Activated T-helper 2 cell treated with anti-CD3 and anti-CD28 coated beads, Interferon-gamma antibody, Interleukin-2, Interleukin-4, amounts not matched to agents 10 μg/mL and 5 μg/mL and 100 μg/mL, durations not matched to agents 14 hours and 24 hours and 36 hours (primary cell): ENCODE measurements at regions of chr6 and their contacts with region 1.

Region 1: GRCh38 chr6:107080036-107080435 is 35.3 kb downstream of the BEND3 start:
- DNase-seq: no peak
- H3K4me3 Mint-ChIP-seq: no peak overlapping the region
- H3K27ac Mint-ChIP-seq: no peak overlapping the region
- H3K4me1 Mint-ChIP-seq: peaks cover 40% of the 10 kb centered on the region
- H3K27me3 Mint-ChIP-seq: no peaks in the 10 kb centered on the region

Region 2: GRCh38 chr6:106439446-106439845 is 640.6 kb before region 1 on chr6:
- intact Hi-C with region 1: no loop called
- DNase-seq: no peak
- H3K4me3 Mint-ChIP-seq: no peak overlapping the region
- H3K27ac Mint-ChIP-seq: no peak overlapping the region
- H3K4me1 Mint-ChIP-seq: peaks cover 12% of the 10 kb centered on the region
- H3K27me3 Mint-ChIP-seq: peaks cover 56% of the 10 kb centered on the region

Region 3: DNA sequence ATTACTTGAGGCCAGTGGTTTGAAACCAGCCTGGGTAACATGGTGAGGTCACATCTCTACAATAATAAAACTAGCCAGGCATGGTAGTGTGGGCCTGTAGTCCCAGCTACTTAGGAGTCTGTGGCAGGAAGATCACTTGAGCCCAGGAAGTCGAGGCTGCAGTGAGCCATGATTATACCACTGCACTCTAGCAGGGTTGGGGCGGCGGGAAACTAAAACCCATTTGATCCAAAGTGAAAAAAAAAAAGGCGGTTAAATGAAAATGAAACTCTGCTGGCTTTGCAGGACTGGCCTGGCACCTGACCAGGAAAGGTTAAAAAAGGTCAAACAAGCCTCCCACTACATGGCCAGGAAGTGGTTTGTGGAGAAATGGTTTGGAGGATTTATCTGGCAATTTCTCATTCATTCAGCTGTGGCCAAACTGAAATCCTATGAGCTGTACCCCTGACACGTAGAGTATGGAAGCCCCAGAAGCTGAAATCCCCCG is 15.4 kb before region 1 on chr6:
- intact Hi-C with region 1: loop called (anchors 1 kb)
- DNase-seq: peak; percentile 38
- H3K4me3 Mint-ChIP-seq: no peak overlapping the region
- H3K27ac Mint-ChIP-seq: peak overlapping the region; percentile 95
- H3K4me1 Mint-ChIP-seq: peaks cover 66% of the 10 kb centered on the region
- H3K27me3 Mint-ChIP-seq: no peaks in the 10 kb centered on the region